Endothelial cell of umbilical vein (primary cell): ENCODE measurements at regions of chr4 and their contacts with region 1.

Region 1: GRCh38 chr4:77095101-77095821 is 19.5 kb upstream of the CCNI start:
- DNase-seq: peak; percentile 68
- H3K4me3 ChIP-seq: no peak overlapping the region
- H3K27ac ChIP-seq: no peak overlapping the region
- H3K4me1 ChIP-seq: peaks cover 24% of the 10 kb centered on the region
- H3K27me3 ChIP-seq: peaks cover 0 to 4% of the 10 kb centered on the region in 2 experiments
- CTCF ChIP-seq: peak; percentile 85 to 92
- POLR2A ChIP-seq: no peak

Region 2: DNA sequence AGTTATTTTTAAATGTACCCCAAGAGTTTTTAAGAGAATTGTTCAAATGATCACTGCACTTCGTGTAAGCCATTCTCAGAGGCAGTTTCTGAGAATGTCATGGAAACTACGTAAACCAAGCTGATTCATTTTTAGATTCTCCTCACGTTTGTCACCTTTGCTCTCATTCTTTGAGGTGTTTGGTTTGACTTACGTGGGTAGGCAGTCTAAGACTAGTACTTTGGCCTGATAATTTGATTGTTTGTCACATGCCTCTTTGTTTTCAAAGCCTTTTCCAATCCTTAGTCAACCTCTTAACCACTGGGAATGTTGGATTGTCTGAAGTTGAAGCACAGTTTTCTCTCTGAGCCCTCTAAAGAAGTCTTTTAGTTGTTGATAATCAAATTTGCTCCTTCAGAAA is 135.2 kb before region 1 on chr4:
- CTCF ChIA-PET with region 1: no interaction called
- POLR2A ChIA-PET with region 1: no interaction called
- dilution Hi-C with region 1: no loop called
- intact Hi-C with region 1: no loop called
- DNase-seq: no peak
- H3K4me3 ChIP-seq: no peak overlapping the region
- H3K27ac ChIP-seq: no peak overlapping the region
- H3K4me1 ChIP-seq: no peaks in the 10 kb centered on the region
- H3K27me3 ChIP-seq: no peaks in the 10 kb centered on the region
- CTCF ChIP-seq: no peak
- POLR2A ChIP-seq: no peak

Region 3: DNA sequence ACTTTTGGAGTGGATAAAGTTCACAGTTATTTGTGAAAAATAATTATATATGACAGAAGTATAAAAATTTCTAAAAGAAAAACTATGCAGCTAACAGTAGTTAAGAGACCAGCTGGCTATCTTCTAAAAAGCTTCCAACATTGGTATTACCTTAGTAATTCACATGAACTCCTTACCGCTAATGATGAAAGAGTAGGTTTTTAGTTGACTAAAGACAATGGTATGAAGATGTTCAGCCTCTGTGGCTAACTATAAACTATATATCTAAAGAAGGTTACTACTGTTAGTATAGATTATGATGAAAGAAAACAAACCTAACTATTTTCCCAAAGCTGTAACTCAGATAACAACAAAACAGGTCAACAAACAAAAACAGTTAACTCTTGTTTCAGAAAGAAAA is 29.9 kb before region 1 on chr4:
- CTCF ChIA-PET with region 1: interaction called, 71 read pairs
- POLR2A ChIA-PET with region 1: no interaction called
- dilution Hi-C with region 1: no loop called
- intact Hi-C with region 1: no loop called
- DNase-seq: no peak
- H3K4me3 ChIP-seq: no peak overlapping the region
- H3K27ac ChIP-seq: no peak overlapping the region
- H3K4me1 ChIP-seq: no peaks in the 10 kb centered on the region
- H3K27me3 ChIP-seq: no peaks in the 10 kb centered on the region
- CTCF ChIP-seq: no peak
- POLR2A ChIP-seq: no peak

Region 4: GRCh38 chr4:77082886-77083608 is 12.2 kb before region 1 on chr4:
- CTCF ChIA-PET with region 1: interaction called, 30 read pairs
- POLR2A ChIA-PET with region 1: no interaction called
- dilution Hi-C with region 1: no loop called
- intact Hi-C with region 1: no loop called
- DNase-seq: no peak
- H3K4me3 ChIP-seq: no peak overlapping the region
- H3K27ac ChIP-seq: no peak overlapping the region
- H3K4me1 ChIP-seq: no peaks in the 10 kb centered on the region
- H3K27me3 ChIP-seq: no peaks in the 10 kb centered on the region
- CTCF ChIP-seq: no peak
- POLR2A ChIP-seq: no peak

Region 5: GRCh38 chr4:77126809-77127208 is 31.5 kb after region 1 on chr4:
- CTCF ChIA-PET with region 1: interaction called, 20 read pairs
- POLR2A ChIA-PET with region 1: no interaction called
- dilution Hi-C with region 1: no loop called
- intact Hi-C with region 1: no loop called
- DNase-seq: no peak
- H3K4me3 ChIP-seq: no peak overlapping the region
- H3K27ac ChIP-seq: no peak overlapping the region
- H3K4me1 ChIP-seq: no peaks in the 10 kb centered on the region
- H3K27me3 ChIP-seq: peaks cover 26 to 29% of the 10 kb centered on the region in 2 experiments
- CTCF ChIP-seq: no peak
- POLR2A ChIP-seq: no peak

Region 6: DNA sequence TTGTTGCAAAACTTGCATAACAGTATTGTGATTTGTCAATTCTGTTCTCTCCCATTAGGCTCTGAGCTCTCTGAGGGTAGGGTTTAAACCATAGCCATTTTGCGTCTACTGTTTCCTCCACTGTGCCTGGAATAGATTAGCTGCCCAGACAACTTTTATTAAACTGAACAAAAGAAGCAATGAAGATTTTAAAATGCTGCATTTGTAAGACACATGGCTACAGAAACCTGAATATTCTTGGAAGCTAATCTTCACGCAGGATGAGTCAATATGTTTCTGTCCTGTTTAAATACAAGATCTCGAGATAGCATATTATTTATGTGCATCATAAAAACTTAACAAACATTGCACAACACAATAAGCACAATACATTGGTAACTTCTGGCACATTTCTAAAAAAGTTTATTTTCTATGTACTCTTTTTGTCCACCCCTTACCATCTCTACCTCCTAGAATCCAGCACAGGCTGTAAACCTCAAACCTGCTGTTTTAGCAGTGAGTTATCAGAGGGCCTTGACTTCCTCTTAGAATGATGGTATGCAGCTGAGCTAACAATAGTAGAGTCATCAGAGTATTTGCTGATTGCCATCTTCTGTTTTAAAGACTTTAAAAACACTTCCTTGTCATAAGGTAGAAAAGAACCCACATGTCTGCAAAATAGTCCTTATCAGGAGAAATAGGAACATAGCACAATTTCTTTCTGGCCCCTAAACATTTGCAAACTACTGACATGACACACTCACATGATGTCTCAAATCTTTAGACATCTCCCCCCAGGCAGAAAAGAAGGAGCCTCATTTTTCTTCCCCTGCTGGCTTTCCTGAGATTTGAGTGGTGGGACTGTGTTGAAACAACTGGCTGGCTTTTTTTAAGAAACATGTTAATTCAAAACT is 51.2 kb after region 1 on chr4:
- CTCF ChIA-PET with region 1: interaction called, 63 read pairs
- POLR2A ChIA-PET with region 1: no interaction called
- dilution Hi-C with region 1: no loop called
- intact Hi-C with region 1: loop called (anchors 1 kb)
- DNase-seq: peak; percentile 67
- H3K4me3 ChIP-seq: no peak overlapping the region
- H3K27ac ChIP-seq: no peak overlapping the region
- H3K4me1 ChIP-seq: peaks cover 18% of the 10 kb centered on the region
- H3K27me3 ChIP-seq: peaks cover 0 to 4% of the 10 kb centered on the region in 2 experiments
- CTCF ChIP-seq: no peak
- POLR2A ChIP-seq: no peak

Region 7: DNA sequence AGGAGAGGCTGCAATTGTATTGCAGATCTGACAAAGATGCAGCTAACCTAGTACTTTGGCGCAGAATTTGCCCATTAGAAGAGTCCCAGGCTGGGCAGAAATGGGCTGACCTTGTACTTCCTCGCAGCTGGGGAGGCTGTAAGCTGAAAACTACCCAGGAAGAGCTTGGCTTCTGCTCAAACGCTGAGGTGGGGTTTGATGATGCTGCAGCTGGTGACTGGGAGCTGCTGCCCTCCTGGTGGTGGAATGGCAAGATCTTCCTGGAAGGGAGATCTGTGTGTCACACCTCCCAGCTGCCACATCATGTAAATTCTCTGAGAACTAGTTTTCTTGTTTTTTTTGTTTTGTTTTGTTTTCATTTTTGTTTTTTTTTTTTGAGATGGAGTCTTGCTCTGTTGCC is 79.2 kb after region 1 on chr4:
- CTCF ChIA-PET with region 1: interaction called, 10 read pairs
- POLR2A ChIA-PET with region 1: no interaction called
- dilution Hi-C with region 1: no loop called
- intact Hi-C with region 1: no loop called
- DNase-seq: no peak
- H3K4me3 ChIP-seq: no peak overlapping the region
- H3K27ac ChIP-seq: no peak overlapping the region
- H3K4me1 ChIP-seq: no peaks in the 10 kb centered on the region
- H3K27me3 ChIP-seq: peaks cover 24% of the 10 kb centered on the region in 2 experiments
- CTCF ChIP-seq: no peak
- POLR2A ChIP-seq: no peak